ENCODE measurements at regions of chr10 and their contacts with region 1.

Region 1: DNA sequence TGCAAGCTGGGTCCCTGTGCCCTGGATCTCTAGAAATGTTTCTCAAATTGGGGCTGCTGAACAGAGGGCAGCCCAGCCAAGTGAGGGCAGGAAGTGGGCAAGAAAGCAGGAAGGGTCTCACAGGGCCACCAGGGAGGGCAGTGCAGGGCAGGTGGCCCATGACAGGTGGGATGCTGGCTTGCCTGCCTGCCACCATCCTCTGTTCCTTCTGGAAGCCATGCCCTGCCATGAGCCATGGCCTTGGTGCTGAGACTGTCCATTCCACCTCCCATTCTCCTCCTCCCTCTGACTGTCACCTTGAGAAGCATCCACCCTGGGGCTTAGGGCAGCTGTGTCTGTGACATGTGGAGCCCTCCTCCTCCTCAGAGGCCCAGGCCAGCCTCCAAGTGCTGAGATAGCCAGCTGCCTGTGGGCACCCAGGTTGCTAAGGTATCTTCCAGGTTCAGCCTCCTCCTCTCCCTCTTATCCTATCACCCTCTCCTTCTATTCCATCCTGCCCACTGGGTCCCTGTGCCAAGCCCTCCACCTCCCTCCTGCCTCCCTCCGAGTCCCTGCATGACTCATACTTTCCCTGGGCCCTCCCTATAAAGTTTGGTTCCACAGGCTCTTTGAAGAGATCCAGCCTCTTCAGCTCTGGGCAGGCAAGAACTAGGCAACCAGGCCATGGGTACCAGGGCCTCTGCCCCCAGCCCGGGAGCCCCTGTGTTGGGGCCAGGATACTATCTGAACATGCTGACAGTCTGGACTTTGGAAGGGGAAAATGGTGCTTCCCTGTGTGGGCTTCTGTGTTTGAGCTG is 1.3 kb downstream of the VSIR start:
- DNase-seq: no peak
- ATAC-seq: no peak
- H3K4me3 ChIP-seq: peak overlapping the region; percentile 76; the same call in 1 of the 2 replicates
- H3K27ac ChIP-seq: peak overlapping the region; percentile 14; the same call in 1 of the 2 replicates
- H3K4me1 ChIP-seq: peaks cover 70% of the 10 kb centered on the region
- H3K27me3 ChIP-seq: no peaks in the 10 kb centered on the region
- CTCF ChIP-seq: no peak
- EP300 ChIP-seq: no peak
- POLR2A ChIP-seq: no peak
- RAD21 ChIP-seq: no peak

Region 2: DNA sequence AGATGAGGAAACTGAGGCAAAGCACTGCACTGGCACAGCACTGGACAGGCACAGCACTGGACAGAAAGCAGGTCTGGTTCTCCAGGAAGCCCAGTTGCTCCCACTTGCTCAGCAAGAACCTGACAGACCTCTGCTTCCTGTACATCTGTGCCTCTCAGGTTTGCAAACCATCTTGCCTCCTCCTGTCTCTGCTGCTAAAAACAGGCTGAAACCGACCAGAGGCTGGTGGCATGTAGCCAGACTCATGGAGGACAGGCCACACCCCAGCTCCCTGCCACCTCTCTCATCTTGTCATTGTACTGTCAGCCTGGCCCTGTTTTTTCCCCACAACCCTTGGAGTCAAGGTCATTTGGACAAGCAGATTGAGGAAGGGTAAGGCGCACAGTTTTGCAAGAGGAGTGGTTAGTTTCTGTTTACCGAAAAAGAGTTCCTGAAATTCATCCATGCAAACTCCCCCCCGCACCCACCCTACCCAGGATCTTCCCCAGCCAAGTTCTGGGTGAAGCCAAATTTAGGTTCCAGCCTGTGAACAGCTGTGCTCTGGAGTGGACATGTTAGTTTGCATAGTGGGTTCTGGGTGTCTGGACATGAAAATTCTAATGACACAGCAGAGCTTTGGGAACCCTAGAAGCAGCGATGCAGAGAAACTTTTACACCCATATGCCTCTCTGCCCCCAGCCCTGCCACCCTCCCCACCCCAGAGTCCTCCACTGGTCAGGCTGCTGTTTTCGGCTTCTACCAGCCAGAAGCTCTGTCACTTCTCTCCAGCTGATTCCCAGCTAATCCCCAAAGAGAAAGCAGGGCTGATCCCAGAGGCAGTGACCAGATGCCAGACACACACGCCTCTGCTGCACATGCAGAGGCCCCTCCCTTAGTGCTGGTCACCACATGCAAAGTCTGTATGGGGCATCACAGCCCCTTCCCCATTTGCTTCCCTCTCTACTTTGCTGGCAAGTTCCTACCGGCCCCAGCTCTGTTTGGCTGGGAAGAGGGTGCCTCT is 44.0 kb before region 1 on chr10:
- CTCF ChIA-PET with region 1: interaction called, 40 read pairs
- POLR2A ChIA-PET with region 1: interaction called, 7 read pairs
- RAD21 ChIA-PET with region 1: interaction called, 19 read pairs
- SMC1A ChIA-PET with region 1: interaction called, 33 read pairs
- in situ Hi-C with region 1: no loop called
- intact Hi-C with region 1: loop called (anchors 1 kb)
- DNase-seq: peak; percentile 90
- ATAC-seq: peak; percentile 76
- H3K4me3 ChIP-seq: peak overlapping the region; percentile 13; the same call in 1 of the 2 replicates
- H3K27ac ChIP-seq: peak overlapping the region; percentile 81
- H3K4me1 ChIP-seq: peaks cover 48% of the 10 kb centered on the region
- H3K27me3 ChIP-seq: no peaks in the 10 kb centered on the region
- CTCF ChIP-seq: no peak
- EP300 ChIP-seq: no peak
- POLR2A ChIP-seq: peak; percentile 79
- RAD21 ChIP-seq: no peak

Region 3: DNA sequence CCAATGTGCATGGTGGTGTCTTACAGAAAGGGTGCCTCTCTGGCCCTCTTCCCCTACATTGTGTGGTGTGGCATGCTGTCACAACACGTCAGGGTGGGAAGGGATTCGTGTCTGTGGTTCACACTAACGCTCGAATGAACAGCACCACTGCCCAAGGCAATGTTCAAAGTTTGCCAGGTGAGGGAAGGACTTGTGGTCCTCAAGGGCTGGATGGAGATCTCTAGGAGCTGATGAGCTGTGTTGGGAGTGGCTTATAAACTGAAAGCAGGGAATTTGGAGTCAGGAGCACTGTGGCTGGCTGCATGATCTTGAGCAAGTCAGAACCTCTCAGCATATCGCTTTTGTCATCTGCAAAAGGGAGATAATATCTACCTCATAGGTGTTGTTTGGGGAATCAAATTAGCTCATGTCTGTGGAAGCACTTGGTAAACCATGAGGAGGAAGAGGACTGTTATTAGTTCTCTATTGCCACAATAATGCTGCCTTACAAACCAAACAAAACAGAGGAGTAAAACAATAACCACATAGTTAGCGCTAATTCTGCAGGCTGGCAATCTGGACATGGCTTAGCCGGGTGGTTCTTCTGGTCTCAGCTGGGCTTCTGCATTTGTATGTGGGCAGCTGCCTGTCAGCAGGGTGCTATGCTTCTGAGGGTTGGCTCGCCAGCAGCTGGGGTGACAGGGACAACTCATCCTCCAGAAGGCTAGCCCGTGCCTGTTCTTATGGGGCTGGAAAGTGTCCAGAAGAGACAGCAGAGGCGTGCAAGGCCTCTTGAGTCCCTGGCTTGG is 29.5 kb before region 1 on chr10:
- CTCF ChIA-PET with region 1: interaction called, 8 read pairs
- POLR2A ChIA-PET with region 1: interaction called, 9 read pairs
- RAD21 ChIA-PET with region 1: interaction called, 6 read pairs
- SMC1A ChIA-PET with region 1: interaction called, 13 read pairs
- in situ Hi-C with region 1: no loop called
- intact Hi-C with region 1: no loop called
- DNase-seq: no peak
- ATAC-seq: peak; percentile 44
- H3K4me3 ChIP-seq: no peak overlapping the region
- H3K27ac ChIP-seq: no peak overlapping the region
- H3K4me1 ChIP-seq: peaks cover 19% of the 10 kb centered on the region
- H3K27me3 ChIP-seq: no peaks in the 10 kb centered on the region
- CTCF ChIP-seq: no peak
- EP300 ChIP-seq: no peak
- POLR2A ChIP-seq: no peak
- RAD21 ChIP-seq: no peak

Region 4: DNA sequence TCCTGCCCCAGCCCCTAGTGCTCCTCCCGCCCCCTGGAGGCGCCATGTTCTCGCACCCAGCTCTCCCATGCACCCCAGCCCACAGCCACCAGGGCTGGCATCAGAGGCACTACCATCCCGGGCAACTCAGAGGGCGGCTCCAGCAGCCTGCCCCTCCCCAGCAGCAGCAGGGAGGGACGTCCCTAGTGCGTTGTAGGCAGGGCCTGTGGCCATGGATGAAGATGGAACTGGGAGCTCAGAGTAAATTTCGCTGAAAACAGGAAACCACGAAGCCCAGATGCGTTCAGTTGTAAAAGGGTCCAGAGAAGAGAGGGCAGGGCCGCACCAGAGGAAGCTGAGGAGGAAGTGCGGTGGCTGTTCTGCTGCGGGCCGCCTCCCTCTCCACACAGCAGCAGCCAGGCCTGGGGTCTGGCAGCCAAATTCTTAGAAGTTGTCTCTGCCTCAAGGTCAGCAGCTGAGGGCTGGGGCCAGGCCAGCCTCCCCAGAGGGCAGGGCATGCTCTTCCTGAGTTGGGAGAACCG is 23.3 kb before region 1 on chr10:
- CTCF ChIA-PET with region 1: interaction called, 8 read pairs
- POLR2A ChIA-PET with region 1: interaction called, 9 read pairs
- RAD21 ChIA-PET with region 1: interaction called, 6 read pairs
- SMC1A ChIA-PET with region 1: interaction called, 13 read pairs
- in situ Hi-C with region 1: no loop called
- intact Hi-C with region 1: loop called (anchors 2 kb)
- DNase-seq: peak; percentile 58
- ATAC-seq: peak; percentile 75
- H3K4me3 ChIP-seq: no peak overlapping the region; the same call in 1 of the 2 replicates
- H3K27ac ChIP-seq: peak overlapping the region; percentile 77
- H3K4me1 ChIP-seq: peaks cover 51% of the 10 kb centered on the region
- H3K27me3 ChIP-seq: no peaks in the 10 kb centered on the region
- CTCF ChIP-seq: peak in 1 of 3 experiments; percentile 15; a peak in 1 of 6 replicates
- EP300 ChIP-seq: no peak
- POLR2A ChIP-seq: peak; percentile 46; the same call in 1 of the 2 replicates
- RAD21 ChIP-seq: no peak

Region 5: DNA sequence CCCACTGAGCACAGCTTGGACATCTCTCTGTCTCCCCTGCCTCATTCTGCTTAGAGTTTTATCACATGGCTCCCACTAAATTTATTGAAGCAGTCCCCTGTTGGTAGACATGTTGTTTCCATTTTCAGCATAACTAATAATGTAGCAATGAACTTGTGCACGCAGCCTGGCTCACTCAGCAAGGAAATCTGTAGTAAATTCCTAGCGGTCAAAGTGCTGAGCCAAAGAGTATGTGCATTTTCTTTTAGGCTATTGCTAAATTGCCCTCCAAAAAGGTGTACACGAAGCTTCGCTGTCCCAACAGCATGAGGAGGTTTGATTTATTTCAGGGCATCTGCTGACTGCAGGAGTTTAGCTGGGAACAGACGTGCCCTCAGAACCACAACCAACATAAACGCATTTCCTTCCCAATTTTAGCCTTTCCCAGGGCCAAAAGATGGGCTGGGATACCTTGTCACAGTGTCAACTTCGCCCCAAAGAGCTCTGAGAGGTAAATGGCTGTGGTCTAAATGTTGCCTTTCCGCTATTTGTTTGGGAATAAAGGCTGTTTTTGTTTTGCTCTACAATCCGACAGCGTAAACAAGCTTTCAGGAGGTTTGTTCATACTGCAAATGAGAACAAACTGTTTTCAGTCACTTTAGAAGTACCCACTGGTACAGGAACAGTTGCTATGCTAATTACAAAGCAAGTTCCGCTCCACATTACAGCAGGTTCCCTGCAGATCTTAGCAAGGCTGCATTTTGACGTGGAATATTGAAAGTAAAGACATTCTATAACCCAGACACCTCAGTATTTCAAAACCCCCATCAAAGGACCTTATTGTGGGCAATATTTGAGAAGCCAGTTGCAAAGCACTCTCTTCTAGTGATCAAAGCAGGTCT is 15.5 kb before region 1 on chr10:
- CTCF ChIA-PET with region 1: interaction called, 11 read pairs
- POLR2A ChIA-PET with region 1: interaction called, 6 read pairs
- RAD21 ChIA-PET with region 1: interaction called, 7 read pairs
- SMC1A ChIA-PET with region 1: interaction called, 21 read pairs
- in situ Hi-C with region 1: no loop called
- intact Hi-C with region 1: no loop called
- DNase-seq: no peak
- ATAC-seq: peak; percentile 16; the same call in 2 of the 3 replicates
- H3K4me3 ChIP-seq: no peak overlapping the region
- H3K27ac ChIP-seq: no peak overlapping the region
- H3K4me1 ChIP-seq: peaks cover 30% of the 10 kb centered on the region
- H3K27me3 ChIP-seq: no peaks in the 10 kb centered on the region; a peak in 1 of 4 replicates
- CTCF ChIP-seq: no peak
- EP300 ChIP-seq: no peak
- POLR2A ChIP-seq: no peak
- RAD21 ChIP-seq: no peak

Region 6: GRCh38 chr10:71812016-71812912 is 40.2 kb after region 1 on chr10:
- CTCF ChIA-PET with region 1: interaction called, 3 read pairs
- POLR2A ChIA-PET with region 1: interaction called, 5 read pairs
- RAD21 ChIA-PET with region 1: interaction called, 18 read pairs
- SMC1A ChIA-PET with region 1: interaction called, 6 read pairs
- in situ Hi-C with region 1: no loop called
- intact Hi-C with region 1: no loop called
- DNase-seq: no peak
- ATAC-seq: peak; percentile 99
- H3K4me3 ChIP-seq: no peak overlapping the region
- H3K27ac ChIP-seq: no peak overlapping the region
- H3K4me1 ChIP-seq: peaks cover 3% of the 10 kb centered on the region; the same call in 1 of the 2 replicates
- H3K27me3 ChIP-seq: no peaks in the 10 kb centered on the region
- CTCF ChIP-seq: peak; percentile 81 to 89 (median 82)
- EP300 ChIP-seq: no peak
- POLR2A ChIP-seq: peak; percentile 32; the same call in 1 of the 2 replicates
- RAD21 ChIP-seq: peak; percentile 84

Region 7: GRCh38 chr10:71835671-71836595 is 63.9 kb after region 1 on chr10:
- CTCF ChIA-PET with region 1: interaction called, 20 read pairs
- POLR2A ChIA-PET with region 1: interaction called, 5 read pairs
- RAD21 ChIA-PET with region 1: interaction called, 4 read pairs
- SMC1A ChIA-PET with region 1: interaction called, 16 read pairs
- in situ Hi-C with region 1: no loop called
- intact Hi-C with region 1: no loop called
- DNase-seq: peak; percentile 97
- ATAC-seq: peak; percentile 97
- H3K4me3 ChIP-seq: peak overlapping the region; percentile 44
- H3K27ac ChIP-seq: peak overlapping the region; percentile 89
- H3K4me1 ChIP-seq: peaks cover 61% of the 10 kb centered on the region
- H3K27me3 ChIP-seq: no peaks in the 10 kb centered on the region
- CTCF ChIP-seq: no peak
- EP300 ChIP-seq: peak; percentile 87 to 93
- POLR2A ChIP-seq: no peak
- RAD21 ChIP-seq: no peak

Region 8: DNA sequence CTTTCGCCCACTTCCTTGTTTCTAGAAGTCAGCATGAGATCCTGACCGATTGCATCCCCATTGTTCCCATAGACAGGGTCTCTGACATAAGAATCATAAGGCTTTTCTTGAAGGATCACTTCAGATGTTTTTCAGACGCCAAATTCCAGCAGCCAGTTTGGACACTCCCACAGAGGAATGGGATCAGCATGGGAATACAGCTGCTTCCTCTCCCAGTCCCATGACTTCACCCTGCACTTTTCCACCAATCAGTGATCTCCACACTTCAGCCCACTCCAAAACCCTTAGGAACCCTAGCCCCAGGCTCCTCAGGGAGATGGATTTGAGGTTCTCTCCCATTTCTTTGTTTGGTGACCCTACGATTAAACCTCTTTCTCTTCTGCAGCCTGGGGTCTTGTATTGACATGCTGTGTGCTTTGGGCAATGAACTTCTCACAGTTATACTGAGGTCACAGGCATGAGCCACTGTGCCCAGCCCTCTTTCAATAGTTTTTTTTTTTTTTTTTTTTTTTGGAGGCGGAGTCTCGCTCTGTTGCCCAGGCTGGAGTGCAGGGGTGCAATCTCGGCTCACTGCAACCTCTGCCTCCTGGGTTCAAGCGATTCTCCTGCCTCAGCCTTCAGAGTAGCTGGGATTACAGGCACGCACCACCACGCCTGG is 139.4 kb after region 1 on chr10:
- CTCF ChIA-PET with region 1: no interaction called
- POLR2A ChIA-PET with region 1: no interaction called
- RAD21 ChIA-PET with region 1: no interaction called
- SMC1A ChIA-PET with region 1: no interaction called
- in situ Hi-C with region 1: no loop called
- intact Hi-C with region 1: no loop called
- DNase-seq: no peak
- ATAC-seq: no peak
- H3K4me3 ChIP-seq: no peak overlapping the region
- H3K27ac ChIP-seq: no peak overlapping the region
- H3K4me1 ChIP-seq: peaks cover 13% of the 10 kb centered on the region
- H3K27me3 ChIP-seq: no peaks in the 10 kb centered on the region
- CTCF ChIP-seq: no peak
- EP300 ChIP-seq: no peak
- POLR2A ChIP-seq: no peak
- RAD21 ChIP-seq: no peak

Region 9: DNA sequence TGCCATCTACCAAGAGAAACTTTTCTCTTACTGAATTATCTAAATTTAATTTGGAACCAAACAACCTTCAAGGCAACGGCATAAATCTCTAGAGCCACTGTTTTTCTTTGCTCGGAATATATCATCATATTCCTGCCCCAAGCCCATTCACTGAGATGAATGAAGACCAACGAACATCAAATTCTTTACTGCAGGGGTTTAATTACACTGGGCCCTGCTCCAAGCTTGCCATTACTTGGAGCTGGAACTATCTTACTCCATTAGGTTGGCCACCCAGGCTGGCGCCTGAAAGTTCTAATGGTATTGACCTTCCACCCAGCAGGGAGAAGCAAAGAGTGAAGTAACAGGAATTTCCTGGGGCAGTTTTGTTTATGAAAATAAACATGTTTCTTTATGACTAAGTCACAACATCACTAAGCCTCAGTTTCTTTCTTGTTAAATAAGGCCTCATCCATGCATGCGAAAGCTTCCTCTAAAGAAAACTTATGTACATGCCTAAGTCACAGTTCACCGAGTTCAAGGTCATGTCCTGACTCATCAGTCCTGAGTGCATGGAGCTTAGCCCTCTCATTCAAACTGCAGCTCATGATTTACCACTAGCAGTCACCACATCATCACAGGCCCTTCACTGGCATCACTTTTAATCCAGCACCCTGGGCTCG is 401.7 kb after region 1 on chr10:
- CTCF ChIA-PET with region 1: no interaction called
- POLR2A ChIA-PET with region 1: no interaction called
- RAD21 ChIA-PET with region 1: no interaction called
- SMC1A ChIA-PET with region 1: no interaction called
- in situ Hi-C with region 1: no loop called
- intact Hi-C with region 1: no loop called
- DNase-seq: peak; percentile 86
- ATAC-seq: peak; percentile 91
- H3K4me3 ChIP-seq: no peak overlapping the region; the same call in 1 of the 2 replicates
- H3K27ac ChIP-seq: peak overlapping the region; percentile 67
- H3K4me1 ChIP-seq: peaks cover 35% of the 10 kb centered on the region
- H3K27me3 ChIP-seq: no peaks in the 10 kb centered on the region
- CTCF ChIP-seq: no peak
- EP300 ChIP-seq: no peak
- POLR2A ChIP-seq: no peak
- RAD21 ChIP-seq: no peak